Caco-2 (cell line): ENCODE measurements at regions of chr16 and their contacts with region 1.

Region 1: GRCh38 chr16:66344533-66345145 is 21.9 kb upstream of the CDH5 start:
- DNase-seq: peak in 1 of 2 experiments; percentile 55
- H3K4me3 ChIP-seq: no peak overlapping the region
- H3K4me3 Mint-ChIP-seq: no peak overlapping the region
- H3K27ac Mint-ChIP-seq: no peak overlapping the region
- H3K4me1 ChIP-seq: no peaks in the 10 kb centered on the region
- H3K4me1 Mint-ChIP-seq: no peaks in the 10 kb centered on the region
- H3K27me3 ChIP-seq: no peaks in the 10 kb centered on the region
- H3K27me3 Mint-ChIP-seq: no peaks in the 10 kb centered on the region
- CTCF ChIP-seq: peak; percentile 69 to 78

Region 2: DNA sequence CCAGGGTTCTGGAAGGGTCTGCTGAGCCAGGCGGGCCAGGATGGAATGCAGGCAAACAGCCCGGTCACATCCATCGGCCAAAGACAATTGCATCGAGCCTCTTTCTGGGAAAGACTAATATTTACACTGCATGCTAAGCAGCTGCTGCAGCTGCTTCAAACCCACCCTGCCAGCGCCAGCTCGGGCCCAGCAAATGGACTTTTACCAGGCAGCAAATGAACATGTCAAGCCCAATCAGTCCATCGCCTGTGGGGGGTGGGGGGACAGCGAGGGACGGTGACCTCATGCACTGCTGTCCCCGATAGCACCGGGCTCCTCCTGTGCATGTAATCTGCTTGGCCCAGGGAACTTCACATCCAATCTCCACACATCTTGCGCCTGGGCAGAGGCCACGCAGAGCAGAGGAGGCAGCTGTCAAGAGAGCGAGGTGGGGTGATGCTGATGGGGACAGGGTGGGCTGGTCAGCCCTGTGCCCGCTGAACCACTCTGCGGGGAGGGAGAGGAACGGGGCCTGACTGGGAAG is 17.6 kb before region 1 on chr16:
- CTCF ChIA-PET with region 1: interaction called, 22 read pairs
- POLR2A ChIA-PET with region 1: no interaction called
- intact Hi-C with region 1: loop called (anchors 1 kb)
- DNase-seq: peak; percentile 82
- H3K4me3 ChIP-seq: no peak overlapping the region
- H3K4me3 Mint-ChIP-seq: peak overlapping the region; percentile 28
- H3K27ac Mint-ChIP-seq: peak overlapping the region; percentile 92
- H3K4me1 ChIP-seq: peaks cover 25% of the 10 kb centered on the region
- H3K4me1 Mint-ChIP-seq: peaks cover 14% of the 10 kb centered on the region
- H3K27me3 ChIP-seq: no peaks in the 10 kb centered on the region
- H3K27me3 Mint-ChIP-seq: no peaks in the 10 kb centered on the region
- CTCF ChIP-seq: no peak